Activated T-helper 1 cell treated with anti-CD3 and anti-CD28 coated beads, Interleukin-12 subunit alpha, Interleukin-12 subunit beta, Interleukin-2, Interleukin-4 antibody, amounts not matched to agents 30 ng/mL and 10 ng/mL and 1 ng/mL, durations not matched to agents 14 hours and 24 hours and 36 hours (primary cell): ENCODE measurements at regions of chr16 and their contacts with region 1.

Region 1: DNA sequence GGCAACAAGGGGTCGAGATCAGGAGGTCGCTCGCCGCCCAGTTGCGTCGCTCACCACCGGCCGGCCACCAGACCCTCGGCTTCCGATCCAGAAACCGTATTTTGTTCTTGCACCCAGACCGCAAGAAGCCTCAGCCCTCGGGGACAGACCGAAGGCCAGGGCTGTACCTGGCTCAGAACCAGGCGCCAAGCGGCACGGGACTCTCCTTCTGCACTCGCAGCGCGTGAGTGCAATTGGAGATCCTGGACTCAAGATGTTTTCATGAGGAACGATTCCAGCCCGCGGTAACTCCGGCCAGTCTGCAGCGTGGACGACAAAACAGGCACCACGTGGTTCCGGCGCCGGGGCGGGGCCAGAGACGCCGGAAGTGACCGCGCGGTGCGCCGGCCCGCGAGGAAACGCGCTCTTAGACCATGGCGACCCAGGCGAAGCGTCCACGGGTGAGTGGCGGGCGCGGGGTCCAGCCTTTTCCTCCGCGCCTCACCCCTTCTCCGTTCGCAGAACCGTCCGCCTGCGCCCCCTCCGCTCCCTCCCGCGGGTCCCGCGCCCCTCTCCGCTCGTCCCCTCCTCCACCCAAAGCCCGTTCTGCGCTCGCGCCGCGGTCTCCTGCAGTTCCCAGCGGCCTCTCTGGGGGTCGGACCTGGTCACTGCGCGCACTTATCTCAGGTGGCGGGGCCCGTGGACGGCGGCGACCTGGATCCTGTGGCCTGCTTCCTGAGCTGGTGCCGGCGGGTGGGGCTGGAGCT is at the start of gene SETD6:
- DNase-seq: peak; percentile 77
- H3K4me3 Mint-ChIP-seq: peak within 1 kb of the TSS; percentile 92
- H3K27ac Mint-ChIP-seq: peak within 1 kb of the TSS; percentile 83
- H3K4me1 Mint-ChIP-seq: peaks cover 36% of the 10 kb centered on the region
- H3K27me3 Mint-ChIP-seq: no peaks in the 10 kb centered on the region
- total RNA-seq, gene SETD6: 32.1 and 34.9 TPM in 2 replicates

Region 2: GRCh38 chr16:58418601-58419000 is 96.7 kb before region 1 on chr16:
- intact Hi-C with region 1: no loop called
- DNase-seq: no peak
- H3K4me3 Mint-ChIP-seq: no peak overlapping the region
- H3K27ac Mint-ChIP-seq: no peak overlapping the region
- H3K4me1 Mint-ChIP-seq: no peaks in the 10 kb centered on the region
- H3K27me3 Mint-ChIP-seq: peaks cover 2% of the 10 kb centered on the region

Region 3: DNA sequence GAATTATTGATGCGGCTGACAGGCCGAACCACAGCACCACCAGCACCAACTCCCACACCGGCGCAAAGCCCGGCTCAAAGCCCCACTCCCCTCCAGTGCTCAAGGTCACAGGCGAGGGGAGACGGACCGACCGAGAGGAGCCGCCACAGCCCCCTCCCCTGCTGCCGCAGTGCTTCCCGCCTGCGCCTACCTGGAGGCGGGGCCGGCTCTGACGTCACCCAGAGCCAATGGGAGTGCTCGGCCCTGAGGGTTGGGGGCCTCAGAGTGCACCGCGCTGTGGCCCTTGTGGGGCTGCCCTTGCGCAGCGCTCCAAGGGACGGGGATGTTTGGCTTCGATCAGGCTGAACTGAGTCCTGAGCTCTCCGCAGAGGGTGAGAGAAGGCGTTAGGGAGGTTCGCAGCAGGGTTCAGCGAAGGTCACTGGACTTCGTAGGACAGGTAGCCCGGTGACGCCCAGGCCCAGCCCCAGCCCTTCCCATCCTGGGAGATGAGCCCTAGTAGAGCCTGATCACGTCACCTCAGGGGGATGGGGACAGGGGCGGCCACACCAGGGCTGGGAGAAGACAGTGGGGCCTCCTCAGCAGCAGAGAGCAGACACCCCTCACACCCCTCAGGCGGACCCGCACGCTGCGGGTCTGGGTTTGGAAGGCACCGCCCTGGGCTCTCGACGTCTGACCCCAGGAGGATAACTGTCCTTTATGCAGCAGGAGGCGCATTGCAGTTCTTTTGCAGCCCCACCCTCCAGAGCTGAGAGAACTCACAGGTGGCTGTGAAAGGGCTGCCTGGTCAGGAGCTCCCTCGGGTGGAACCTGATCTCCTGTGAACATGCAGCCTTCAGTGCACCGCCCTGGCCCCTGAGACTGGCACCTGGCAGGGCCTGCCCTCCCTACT is 13.8 kb before region 1 on chr16:
- intact Hi-C with region 1: loop called (anchors 1 kb)
- DNase-seq: peak; percentile 34
- H3K4me3 Mint-ChIP-seq: peak overlapping the region; percentile 74
- H3K27ac Mint-ChIP-seq: no peak overlapping the region
- H3K4me1 Mint-ChIP-seq: no peaks in the 10 kb centered on the region
- H3K27me3 Mint-ChIP-seq: peaks cover 4% of the 10 kb centered on the region

Region 4: DNA sequence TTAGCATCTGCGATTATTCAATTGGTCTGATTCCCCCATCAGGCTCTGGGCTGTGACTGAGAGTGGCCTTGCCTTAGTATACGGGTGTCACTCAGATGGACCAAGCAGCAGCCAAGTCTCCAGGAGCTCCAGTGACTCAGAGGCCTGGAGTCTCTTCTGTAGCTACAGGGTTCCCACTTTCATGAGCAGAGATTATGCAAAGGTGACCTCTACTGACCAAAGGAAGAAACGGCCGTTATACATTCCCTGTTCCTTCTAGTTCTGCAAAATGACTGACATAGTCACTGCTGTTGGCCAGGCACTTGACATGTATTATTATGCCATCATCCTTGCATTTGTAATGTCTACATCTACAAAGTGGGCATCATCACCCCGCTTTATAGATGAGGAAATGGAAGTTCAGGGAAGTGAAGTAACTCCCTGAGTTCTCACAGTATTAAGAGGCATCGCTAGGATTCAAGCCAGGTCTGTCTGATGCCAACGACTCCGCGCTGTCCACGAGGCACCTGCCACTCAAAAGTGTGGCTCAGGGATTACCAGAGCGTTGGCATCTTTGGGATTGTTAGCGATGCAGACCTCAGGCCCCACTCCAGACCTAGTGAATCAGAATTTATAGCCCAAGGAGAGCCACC is 146.0 kb after region 1 on chr16:
- intact Hi-C with region 1: loop called (anchors 1 kb)
- DNase-seq: no peak
- H3K4me3 Mint-ChIP-seq: no peak overlapping the region
- H3K27ac Mint-ChIP-seq: no peak overlapping the region
- H3K4me1 Mint-ChIP-seq: no peaks in the 10 kb centered on the region
- H3K27me3 Mint-ChIP-seq: peaks cover 3% of the 10 kb centered on the region

Region 5: DNA sequence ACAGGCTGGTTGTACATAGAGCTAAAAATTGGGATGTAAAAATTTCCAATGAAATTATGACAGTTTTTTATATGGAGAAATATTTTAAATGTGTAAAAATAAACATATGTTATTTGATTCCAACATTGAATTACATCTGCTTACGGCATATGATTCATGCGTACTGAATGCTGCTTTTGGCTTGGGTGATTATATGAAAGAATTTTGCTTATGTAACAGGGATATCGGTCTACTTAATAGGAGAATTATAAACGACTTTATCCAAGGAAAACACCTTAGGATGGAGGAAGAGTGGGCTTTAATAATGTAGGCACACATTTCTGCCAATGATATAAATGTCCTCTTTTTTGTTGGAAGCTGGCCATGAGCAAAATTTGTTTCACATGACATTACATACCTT is 416.1 kb after region 1 on chr16:
- intact Hi-C with region 1: no loop called
- DNase-seq: no peak
- H3K4me3 Mint-ChIP-seq: no peak overlapping the region
- H3K27ac Mint-ChIP-seq: no peak overlapping the region
- H3K4me1 Mint-ChIP-seq: no peaks in the 10 kb centered on the region
- H3K27me3 Mint-ChIP-seq: no peaks in the 10 kb centered on the region